ENCODE measurements at regions of chr19 and their contacts with region 1.

Region 1: GRCh38 chr19:38245826-38246498 is 10.2 kb downstream of the PPP1R14A start:
- DNase-seq: no peak
- H3K4me3 ChIP-seq: no peak overlapping the region
- H3K27ac ChIP-seq: no peak overlapping the region
- H3K4me1 ChIP-seq: peaks cover 4 to 10% (median 8%) of the 10 kb centered on the region in 4 experiments
- H3K27me3 ChIP-seq: no peaks in the 10 kb centered on the region; a peak in 2 of 7 replicates
- CTCF ChIP-seq: no peak
- EP300 ChIP-seq: no peak
- POLR2A ChIP-seq: no peak
- RAD21 ChIP-seq: no peak

Region 2: GRCh38 chr19:38263689-38264485 is 17.9 kb after region 1 on chr19:
- CTCF ChIA-PET with region 1: interaction called, 124 read pairs
- POLR2A ChIA-PET with region 1: interaction called, 19 read pairs
- DNase-seq: peak in 1 of 2 experiments; percentile 80
- H3K4me3 ChIP-seq: peak overlapping the region; percentile 84 to 89 (median 85); a peak in 6 of 8 replicates
- H3K27ac ChIP-seq: peak overlapping the region; percentile 94
- H3K4me1 ChIP-seq: peaks cover 12 to 34% (median 19%) of the 10 kb centered on the region in 4 experiments
- H3K27me3 ChIP-seq: no peaks in the 10 kb centered on the region
- CTCF ChIP-seq: no peak
- EP300 ChIP-seq: no peak
- POLR2A ChIP-seq: no peak
- RAD21 ChIP-seq: no peak

Region 3: GRCh38 chr19:38315657-38316476 is 69.9 kb after region 1 on chr19 and contains the start of gene YIF1B:
- CTCF ChIA-PET with region 1: interaction called, 24 read pairs
- POLR2A ChIA-PET with region 1: interaction called, 4 read pairs
- DNase-seq: peak; percentile 92 to 94
- H3K4me3 ChIP-seq: peak within 1 kb of the TSS; percentile 61 to 89 (median 64)
- H3K27ac ChIP-seq: peak within 1 kb of the TSS; percentile 73
- H3K4me1 ChIP-seq: peaks cover 0 to 11% (median 3%) of the 10 kb centered on the region in 4 experiments; a peak in 5 of 7 replicates
- H3K27me3 ChIP-seq: peaks cover 0 to 29% (median 16%) of the 10 kb centered on the region in 4 experiments; a peak in 6 of 7 replicates
- CTCF ChIP-seq: no peak
- EP300 ChIP-seq: no peak
- POLR2A ChIP-seq: no peak; a peak in 1 of 3 replicates
- RAD21 ChIP-seq: no peak
- total RNA-seq, gene YIF1B: 89.6 and 94.3 TPM in 2 replicates

Region 4: GRCh38 chr19:38335949-38336637 is 90.1 kb after region 1 on chr19:
- CTCF ChIA-PET with region 1: interaction called, 100 read pairs
- POLR2A ChIA-PET with region 1: interaction called, 5 read pairs
- DNase-seq: peak; percentile 79 to 92
- H3K4me3 ChIP-seq: peak overlapping the region; percentile 66 to 86 (median 75)
- H3K27ac ChIP-seq: no peak overlapping the region
- H3K4me1 ChIP-seq: peaks cover 0 to 5% (median 4%) of the 10 kb centered on the region in 4 experiments; a peak in 5 of 7 replicates
- H3K27me3 ChIP-seq: no peaks in the 10 kb centered on the region
- CTCF ChIP-seq: no peak
- EP300 ChIP-seq: no peak
- POLR2A ChIP-seq: no peak
- RAD21 ChIP-seq: no peak

Region 5: GRCh38 chr19:38387550-38388348 is 141.8 kb after region 1 on chr19 and contains the start of gene GGN:
- CTCF ChIA-PET with region 1: interaction called, 24 read pairs
- POLR2A ChIA-PET with region 1: interaction called, 6 read pairs
- DNase-seq: peak; percentile 95 to 98
- H3K4me3 ChIP-seq: peak within 1 kb of the TSS; percentile 93 to 98 (median 96)
- H3K27ac ChIP-seq: peak within 1 kb of the TSS; percentile 74
- H3K4me1 ChIP-seq: peaks cover 10 to 23% (median 14%) of the 10 kb centered on the region in 4 experiments
- H3K27me3 ChIP-seq: no peaks in the 10 kb centered on the region
- CTCF ChIP-seq: no peak
- EP300 ChIP-seq: no peak
- POLR2A ChIP-seq: no peak
- RAD21 ChIP-seq: no peak
- total RNA-seq, gene GGN: 1.2 and 2.7 TPM in 2 replicates

Measured in H1 (cell line).